Pancreas (tissue), 10 donors: ENCODE measurements at regions of chr3 and their contacts with region 1.

Region 1: GRCh38 chr3:1987980-1988379 is 110.7 kb upstream of the CNTN4 start:
- DNase-seq: peak in 5 of 6 donors; percentile 13 to 53 (median 21)
- ATAC-seq: peak in 3 of 4 donors; percentile 79 to 91 (median 91)
- H3K4me3 ChIP-seq: no peak overlapping the region
- H3K27ac ChIP-seq: no peak overlapping the region
- H3K4me1 ChIP-seq: no peaks in the 10 kb centered on the region
- H3K27me3 ChIP-seq: no peaks in the 10 kb centered on the region
- CTCF ChIP-seq: peak in 2 of 4 donors; percentile 15 to 41

Region 2: GRCh38 chr3:1082108-1082507 is 905.9 kb before region 1 on chr3:
- intact Hi-C with region 1: loop called in 1 of 3 experiments (anchors 10 kb)
- DNase-seq: peak in 5 of 6 donors; percentile 20 to 49 (median 41)
- ATAC-seq: peak; percentile 55 to 88 (median 83)
- H3K4me3 ChIP-seq: no peak overlapping the region
- H3K27ac ChIP-seq: no peak overlapping the region
- H3K4me1 ChIP-seq: no peaks in the 10 kb centered on the region
- H3K27me3 ChIP-seq: no peaks in the 10 kb centered on the region
- CTCF ChIP-seq: peak; percentile 35 to 63 (median 60)

Region 3: DNA sequence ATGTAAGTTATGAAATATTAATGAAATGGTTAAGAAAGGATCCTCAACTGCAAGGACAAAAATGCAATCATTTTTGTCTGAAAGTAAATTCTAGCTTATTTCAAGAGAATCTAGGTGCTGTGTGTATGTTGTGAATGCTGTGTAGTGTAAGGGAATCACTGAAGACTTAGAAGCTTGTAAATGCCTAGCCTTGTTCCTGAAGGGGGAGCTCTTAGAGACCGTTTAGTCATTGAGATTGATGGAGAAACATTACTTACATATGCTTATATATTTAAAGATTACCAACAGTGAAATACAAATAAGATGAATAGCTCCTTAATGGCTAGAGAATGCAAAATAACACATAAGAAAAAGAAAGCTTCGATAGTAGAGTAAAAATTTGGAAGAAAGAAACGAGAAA is 178.6 kb after region 1 on chr3:
- intact Hi-C with region 1: no loop called
- DNase-seq: no peak
- ATAC-seq: no peak
- H3K4me3 ChIP-seq: no peak overlapping the region
- H3K27ac ChIP-seq: no peak overlapping the region
- H3K4me1 ChIP-seq: no peaks in the 10 kb centered on the region
- H3K27me3 ChIP-seq: no peaks in the 10 kb centered on the region
- CTCF ChIP-seq: no peak

Region 4: GRCh38 chr3:2441558-2441957 is 453.6 kb after region 1 on chr3:
- intact Hi-C with region 1: no loop called
- DNase-seq: no peak
- ATAC-seq: no peak
- H3K4me3 ChIP-seq: no peak overlapping the region
- H3K27ac ChIP-seq: no peak overlapping the region
- H3K4me1 ChIP-seq: no peaks in the 10 kb centered on the region
- H3K27me3 ChIP-seq: no peaks in the 10 kb centered on the region
- CTCF ChIP-seq: no peak